K562 (cell line): ENCODE measurements at regions of chr3 and their contacts with region 1.

Region 1: DNA sequence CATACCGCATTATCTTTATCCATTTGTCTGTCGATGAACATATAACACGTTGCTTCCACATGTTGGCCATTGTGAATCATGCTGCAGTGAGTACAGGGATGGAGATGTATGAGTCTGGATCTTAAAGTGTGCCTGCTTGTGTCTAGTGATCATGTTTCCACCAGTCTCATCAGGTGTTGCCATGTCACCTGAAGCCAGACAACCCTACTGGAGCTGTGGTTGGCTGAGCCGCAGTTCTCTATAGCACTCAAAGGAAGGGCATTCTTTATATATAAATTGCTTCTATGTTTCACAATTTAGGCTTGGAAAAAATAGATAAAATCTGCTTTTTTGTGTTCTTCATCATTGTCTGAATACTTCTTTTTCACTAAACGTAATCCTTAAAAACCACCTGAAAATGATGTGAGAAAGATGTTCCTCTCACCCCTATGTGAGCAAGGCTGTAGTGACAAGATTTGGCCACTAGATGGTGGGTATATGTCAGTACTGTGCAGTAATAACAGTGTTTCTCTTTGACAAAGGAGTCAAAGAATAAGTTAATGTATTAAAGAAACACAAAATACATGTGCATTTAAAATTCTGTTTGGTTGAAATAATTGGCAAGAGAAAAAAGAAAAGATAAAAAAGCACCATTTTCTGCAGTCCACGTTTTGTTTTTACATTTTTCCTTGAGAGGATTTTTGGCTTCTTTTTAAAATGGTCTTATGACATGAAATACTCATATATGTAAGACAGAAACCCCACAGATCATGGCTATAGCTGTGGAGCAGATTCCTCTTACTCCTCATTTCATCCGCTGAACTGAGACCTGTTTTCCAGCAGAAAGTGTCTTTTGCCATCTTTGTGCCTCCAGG is 394.5 kb upstream of the DPPA4 start:
- DNase-seq: peak; percentile 7 to 24 (median 20)
- ATAC-seq: 0 out of 3 replicates have a peak, but pooled peaks have one; percentile 57
- H3K4me3 ChIP-seq: no peak overlapping the region
- H3K27ac ChIP-seq: no peak overlapping the region
- H3K4me1 ChIP-seq: no peaks in the 10 kb centered on the region
- H3K27me3 ChIP-seq: no peaks in the 10 kb centered on the region
- CTCF ChIP-seq: peak; percentile 22 to 51 (median 46); a peak in 5 of 6 replicates
- EP300 ChIP-seq: no peak
- POLR2A ChIP-seq: no peak
- RAD21 ChIP-seq: peak; percentile 50 to 76

Region 2: GRCh38 chr3:111481551-111481950 is 1749.7 kb after region 1 on chr3:
- CTCF ChIA-PET with region 1: no interaction called
- POLR2A ChIA-PET with region 1: no interaction called
- in situ Hi-C with region 1: loop called (anchors 25 kb)
- intact Hi-C with region 1: no loop called
- DNase-seq: no peak
- ATAC-seq: no peak
- H3K4me3 ChIP-seq: no peak overlapping the region
- H3K27ac ChIP-seq: no peak overlapping the region
- H3K4me1 ChIP-seq: no peaks in the 10 kb centered on the region
- H3K27me3 ChIP-seq: no peaks in the 10 kb centered on the region
- CTCF ChIP-seq: no peak
- EP300 ChIP-seq: no peak
- POLR2A ChIP-seq: no peak
- RAD21 ChIP-seq: no peak